ENCODE measurements at regions of chr19 and their contacts with region 1.

Region 1: GRCh38 chr19:41439441-41440222 is at the start of gene DMAC2:
- DNase-seq: peak; percentile 86 to 97 (median 93)
- ATAC-seq: peak; percentile 99
- H3K4me3 ChIP-seq: peak within 1 kb of the TSS; percentile 80 to 98
- H3K4me3 Mint-ChIP-seq: peak within 1 kb of the TSS; percentile 54
- H3K27ac ChIP-seq: peak within 1 kb of the TSS; percentile 66 to 93
- H3K27ac Mint-ChIP-seq: no peak within 1 kb of the TSS
- H3K4me1 ChIP-seq: peaks cover 11% of the 10 kb centered on the region
- H3K4me1 Mint-ChIP-seq: peaks cover 10% of the 10 kb centered on the region
- H3K27me3 ChIP-seq: no peaks in the 10 kb centered on the region
- H3K27me3 Mint-ChIP-seq: peaks cover 12% of the 10 kb centered on the region
- CTCF ChIP-seq: peak; percentile 60
- total RNA-seq, gene DMAC2: 23.2 to 25.7 TPM

Region 2: GRCh38 chr19:41206926-41207750 is 232.5 kb before region 1 on chr19:
- CTCF ChIA-PET with region 1: interaction called, 5 read pairs
- POLR2A ChIA-PET with region 1: no interaction called
- intact Hi-C with region 1: loop called (anchors 1 to 10 kb)
- DNase-seq: no peak
- ATAC-seq: no peak
- H3K4me3 ChIP-seq: no peak overlapping the region
- H3K4me3 Mint-ChIP-seq: no peak overlapping the region
- H3K27ac ChIP-seq: no peak overlapping the region
- H3K27ac Mint-ChIP-seq: no peak overlapping the region
- H3K4me1 ChIP-seq: no peaks in the 10 kb centered on the region
- H3K4me1 Mint-ChIP-seq: peaks cover 6% of the 10 kb centered on the region
- H3K27me3 ChIP-seq: no peaks in the 10 kb centered on the region
- H3K27me3 Mint-ChIP-seq: no peaks in the 10 kb centered on the region
- CTCF ChIP-seq: no peak

Region 3: GRCh38 chr19:41327576-41328156 is 112.0 kb before region 1 on chr19:
- CTCF ChIA-PET with region 1: no interaction called
- POLR2A ChIA-PET with region 1: no interaction called
- intact Hi-C with region 1: loop called in 1 of 2 experiments (anchors 10 kb)
- DNase-seq: peak in 8 of 9 experiments; percentile 68 to 98 (median 82)
- ATAC-seq: no peak
- H3K4me3 ChIP-seq: peak overlapping the region; percentile 21 to 23
- H3K4me3 Mint-ChIP-seq: peak overlapping the region; percentile 74
- H3K27ac ChIP-seq: peak overlapping the region; percentile 50 to 78
- H3K27ac Mint-ChIP-seq: peak overlapping the region; percentile 98
- H3K4me1 ChIP-seq: peaks cover 63% of the 10 kb centered on the region
- H3K4me1 Mint-ChIP-seq: peaks cover 69% of the 10 kb centered on the region
- H3K27me3 ChIP-seq: no peaks in the 10 kb centered on the region
- H3K27me3 Mint-ChIP-seq: no peaks in the 10 kb centered on the region
- CTCF ChIP-seq: no peak

Region 4: DNA sequence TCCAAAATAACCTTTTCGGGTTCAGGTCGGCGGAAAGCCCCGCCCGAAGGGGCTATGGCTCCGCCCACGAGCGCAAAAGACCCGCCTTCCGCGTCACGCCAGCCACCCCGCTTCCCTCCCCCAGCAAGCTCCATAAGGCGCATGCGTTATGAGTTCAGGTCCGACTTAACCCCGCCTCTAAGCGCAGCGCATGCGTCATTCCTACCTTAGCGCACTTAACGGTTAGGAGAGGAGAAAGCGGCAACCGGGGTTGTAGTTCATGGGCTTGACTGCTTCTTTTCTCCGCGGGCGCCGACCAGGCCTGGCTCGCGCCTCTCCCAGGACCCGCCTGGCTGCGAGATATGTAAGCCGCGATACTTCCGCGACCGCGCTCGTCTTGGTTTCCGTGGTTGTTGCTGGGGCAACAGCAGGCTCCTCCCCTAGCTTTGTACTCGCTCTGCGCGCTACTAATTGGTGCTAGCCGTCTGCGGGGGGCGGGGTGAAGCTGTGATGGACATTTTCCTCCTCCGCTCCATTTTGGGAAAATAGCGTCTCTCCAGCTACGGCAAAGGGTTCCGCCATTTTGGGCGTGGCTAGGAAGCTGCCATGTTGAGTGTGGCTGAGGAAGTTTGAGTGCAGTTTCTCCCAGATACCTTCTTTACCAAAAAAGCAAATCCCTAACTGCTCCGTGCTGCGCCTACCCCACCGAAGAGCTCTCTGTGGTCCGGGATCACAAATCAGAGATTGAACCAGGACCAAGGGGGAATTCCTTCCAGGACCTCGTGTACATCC is 75.7 kb before region 1 on chr19 and contains the start of gene B9D2:
- CTCF ChIA-PET with region 1: interaction called, 4 read pairs
- POLR2A ChIA-PET with region 1: interaction called, 10 read pairs
- intact Hi-C with region 1: loop called in 1 of 2 experiments (anchors 5 kb)
- DNase-seq: peak; percentile 95 to 99 (median 98)
- ATAC-seq: peak; percentile 89
- H3K4me3 ChIP-seq: peak within 1 kb of the TSS; percentile 80 to 81
- H3K4me3 Mint-ChIP-seq: peak within 1 kb of the TSS; percentile 98
- H3K27ac ChIP-seq: peak within 1 kb of the TSS; percentile 99 to 100
- H3K27ac Mint-ChIP-seq: peak within 1 kb of the TSS; percentile 100
- H3K4me1 ChIP-seq: peaks cover 27% of the 10 kb centered on the region
- H3K4me1 Mint-ChIP-seq: peaks cover 30% of the 10 kb centered on the region
- H3K27me3 ChIP-seq: no peaks in the 10 kb centered on the region
- H3K27me3 Mint-ChIP-seq: no peaks in the 10 kb centered on the region
- CTCF ChIP-seq: no peak
- total RNA-seq, gene B9D2: 19.6 to 25.9 TPM

Region 5: DNA sequence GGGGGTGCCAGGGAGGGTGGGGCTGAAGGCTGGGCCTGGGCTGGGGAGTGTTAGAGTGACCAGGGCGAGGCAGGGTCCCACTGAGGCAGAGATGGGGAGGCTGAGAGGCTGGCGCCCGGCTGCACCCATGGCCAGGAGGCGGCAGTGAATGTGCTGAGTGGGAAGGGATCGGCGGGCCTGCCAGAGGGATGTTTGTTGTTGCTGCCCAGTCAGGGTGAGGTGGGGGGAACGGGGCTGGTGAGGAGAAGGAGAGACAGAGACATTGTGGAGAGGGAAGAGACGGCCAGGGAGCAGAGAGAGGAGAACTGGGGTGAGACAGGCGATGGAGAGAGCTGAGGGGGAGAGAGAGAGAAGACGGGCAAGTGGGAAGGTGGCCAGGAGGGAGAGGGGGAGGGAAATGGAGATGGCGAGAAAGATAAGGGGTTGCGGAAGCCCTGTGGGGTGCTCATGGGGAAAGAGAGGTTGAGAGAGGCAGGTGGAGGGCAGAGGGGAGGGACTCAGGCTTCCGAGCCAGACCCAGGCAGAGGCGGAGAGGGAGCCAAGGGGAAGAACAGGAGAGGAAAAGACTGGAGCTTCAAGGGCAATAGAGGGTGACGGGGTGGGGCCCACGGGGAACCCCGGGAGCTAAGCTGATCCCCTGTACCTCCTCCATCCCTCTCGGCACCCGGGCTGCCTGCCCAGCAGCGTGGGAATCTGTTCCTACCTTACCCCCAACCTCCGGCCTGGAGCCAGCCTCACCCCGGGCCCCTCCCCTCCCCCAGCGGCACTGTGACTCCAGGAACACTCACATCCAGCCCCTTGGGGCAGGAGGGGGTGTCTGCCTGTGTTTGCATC is 11.8 kb before region 1 on chr19:
- CTCF ChIA-PET with region 1: interaction called, 10 read pairs
- POLR2A ChIA-PET with region 1: interaction called, 7 read pairs
- intact Hi-C with region 1: loop called in 1 of 2 experiments (anchors 1 kb)
- DNase-seq: peak in 8 of 9 experiments; percentile 29 to 83 (median 51)
- ATAC-seq: peak; percentile 67
- H3K4me3 ChIP-seq: peak overlapping the region; percentile 41 to 52
- H3K4me3 Mint-ChIP-seq: peak overlapping the region; percentile 89
- H3K27ac ChIP-seq: peak overlapping the region; percentile 44 to 65
- H3K27ac Mint-ChIP-seq: peak overlapping the region; percentile 90
- H3K4me1 ChIP-seq: peaks cover 25% of the 10 kb centered on the region
- H3K4me1 Mint-ChIP-seq: peaks cover 33% of the 10 kb centered on the region
- H3K27me3 ChIP-seq: no peaks in the 10 kb centered on the region
- H3K27me3 Mint-ChIP-seq: no peaks in the 10 kb centered on the region
- CTCF ChIP-seq: no peak

Region 6: DNA sequence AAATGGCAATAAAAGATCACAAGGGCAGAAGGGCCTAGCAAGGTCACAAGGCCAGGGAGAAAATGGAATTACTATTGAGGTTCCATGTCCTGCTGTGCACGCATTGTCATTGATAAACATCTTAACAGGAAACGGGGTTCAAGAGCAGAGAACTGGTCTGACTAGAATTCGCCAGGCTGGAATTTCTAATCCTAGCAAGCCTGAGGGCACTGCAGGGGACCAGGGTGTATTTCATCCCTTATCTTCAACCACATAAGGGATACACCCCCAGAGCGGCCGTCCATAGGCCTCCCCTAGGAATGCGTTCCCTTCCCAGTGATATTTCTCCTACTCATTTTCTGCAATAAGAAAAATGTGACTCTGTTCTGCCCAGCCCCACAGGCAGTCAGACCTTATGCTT is 22.9 kb after region 1 on chr19:
- CTCF ChIA-PET with region 1: no interaction called
- POLR2A ChIA-PET with region 1: no interaction called
- intact Hi-C with region 1: no loop called
- DNase-seq: no peak
- ATAC-seq: no peak
- H3K4me3 ChIP-seq: no peak overlapping the region
- H3K4me3 Mint-ChIP-seq: no peak overlapping the region
- H3K27ac ChIP-seq: no peak overlapping the region
- H3K27ac Mint-ChIP-seq: no peak overlapping the region
- H3K4me1 ChIP-seq: peaks cover 5% of the 10 kb centered on the region
- H3K4me1 Mint-ChIP-seq: peaks cover 5% of the 10 kb centered on the region
- H3K27me3 ChIP-seq: no peaks in the 10 kb centered on the region
- H3K27me3 Mint-ChIP-seq: peaks cover 45% of the 10 kb centered on the region
- CTCF ChIP-seq: no peak

Measured in CD8-positive, alpha-beta T cell (primary cell).